ENCODE measurements at regions of chr2 and their contacts with region 1.

Region 1: GRCh38 chr2:219547621-219548020 is 3.8 kb downstream of the TMEM198 start:
- DNase-seq: no peak
- ATAC-seq: no peak
- H3K4me3 ChIP-seq: no peak overlapping the region
- H3K27ac ChIP-seq: no peak overlapping the region
- H3K4me1 ChIP-seq: peaks cover 25% of the 10 kb centered on the region
- H3K27me3 ChIP-seq: peaks cover 21% of the 10 kb centered on the region
- CTCF ChIP-seq: no peak

Region 2: GRCh38 chr2:219642465-219643080 is 95.0 kb after region 1 on chr2:
- intact Hi-C with region 1: loop called (anchors 5 kb)
- DNase-seq: peak; percentile 98
- ATAC-seq: peak; percentile 94 to 96
- H3K4me3 ChIP-seq: no peak overlapping the region
- H3K27ac ChIP-seq: no peak overlapping the region
- H3K4me1 ChIP-seq: peaks cover 23% of the 10 kb centered on the region
- H3K27me3 ChIP-seq: peaks cover 3% of the 10 kb centered on the region
- CTCF ChIP-seq: peak; percentile 99

Region 3: DNA sequence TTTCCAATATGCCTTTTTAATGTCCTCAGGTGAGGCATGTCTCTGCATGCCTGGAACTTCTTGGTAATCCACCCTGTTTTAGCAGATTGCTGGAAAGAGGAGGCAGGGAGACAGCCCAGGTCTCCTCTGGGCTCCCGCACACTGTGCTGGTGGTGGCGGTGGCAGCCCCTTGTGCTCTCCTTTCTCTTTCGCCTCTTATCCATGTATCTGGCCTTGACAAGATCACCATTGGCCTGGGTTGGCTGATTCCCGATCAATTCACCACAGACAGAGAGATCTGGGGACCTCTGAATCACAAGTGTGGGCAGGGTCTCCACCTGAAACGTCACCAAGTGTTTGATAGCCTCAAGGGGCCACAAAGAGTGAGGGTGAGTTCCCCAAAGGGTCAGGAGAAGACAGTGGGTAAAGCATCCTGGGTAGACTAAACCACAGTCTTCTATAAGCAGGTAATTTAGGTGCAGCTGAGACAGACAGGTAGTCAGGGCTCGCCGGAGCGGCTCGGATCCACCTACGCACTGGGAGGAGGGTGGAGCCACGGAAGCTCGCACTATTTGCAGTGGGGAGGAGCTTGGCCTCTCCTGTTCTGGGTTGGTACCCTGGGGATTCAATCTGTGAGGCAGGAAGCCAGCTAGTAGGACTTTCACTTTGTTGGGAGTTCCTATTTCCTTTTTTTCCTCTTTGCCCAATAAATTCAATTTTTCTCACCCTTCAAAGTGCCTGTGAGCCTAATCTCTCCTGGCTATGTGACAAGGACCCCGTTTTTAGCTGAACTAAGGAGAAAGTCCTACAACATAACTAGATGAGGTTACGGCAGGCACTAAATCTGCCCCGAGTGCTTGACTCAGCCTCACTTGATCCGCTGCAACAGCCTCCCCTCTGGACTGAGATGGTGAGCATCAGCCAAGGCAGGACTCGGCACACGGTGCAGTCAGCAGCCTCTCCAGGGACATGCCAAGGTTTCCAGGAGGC is 137.4 kb after region 1 on chr2:
- intact Hi-C with region 1: no loop called
- DNase-seq: peak; percentile 78
- ATAC-seq: peak; percentile 95 to 97
- H3K4me3 ChIP-seq: peak overlapping the region; percentile 55
- H3K27ac ChIP-seq: peak overlapping the region; percentile 62
- H3K4me1 ChIP-seq: peaks cover 7% of the 10 kb centered on the region
- H3K27me3 ChIP-seq: peaks cover 6% of the 10 kb centered on the region
- CTCF ChIP-seq: no peak

Region 4: GRCh38 chr2:220434385-220434784 is 886.8 kb after region 1 on chr2:
- intact Hi-C with region 1: no loop called
- DNase-seq: no peak
- ATAC-seq: no peak
- H3K4me3 ChIP-seq: no peak overlapping the region
- H3K27ac ChIP-seq: no peak overlapping the region
- H3K4me1 ChIP-seq: no peaks in the 10 kb centered on the region
- H3K27me3 ChIP-seq: no peaks in the 10 kb centered on the region
- CTCF ChIP-seq: no peak